MCF 10A (cell line): ENCODE measurements at regions of chrX and their contacts with region 1.

Region 1: GRCh38 chrX:111869639-111870034 is 6.3 kb upstream of the TRPC5OS start:
- DNase-seq: peak; percentile 61
- H3K4me3 Mint-ChIP-seq: no peak overlapping the region
- H3K27ac Mint-ChIP-seq: no peak overlapping the region
- H3K4me1 Mint-ChIP-seq: peaks cover 6% of the 10 kb centered on the region
- H3K27me3 Mint-ChIP-seq: peaks cover 59% of the 10 kb centered on the region
- CTCF ChIP-seq: peak; percentile 60

Region 2: DNA sequence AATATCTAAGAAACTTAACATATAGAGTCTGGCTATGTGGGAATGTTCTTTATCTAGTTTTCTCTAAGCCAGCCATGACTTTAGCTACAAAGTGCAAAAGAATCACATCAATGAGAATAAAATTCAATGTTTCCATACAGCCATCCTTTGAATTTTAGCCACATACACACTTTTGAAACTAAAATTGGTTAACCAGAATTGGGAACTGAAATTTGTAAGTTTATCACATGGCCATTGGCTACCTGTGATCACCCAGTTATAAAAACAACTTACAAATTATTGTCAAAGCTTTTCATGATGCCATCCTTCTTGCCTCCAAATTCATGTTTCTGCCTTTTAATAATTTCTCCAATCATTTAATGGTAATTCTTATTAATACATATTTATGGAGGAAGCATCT is 723.8 kb before region 1 on chrX:
- CTCF ChIA-PET with region 1: no interaction called
- POLR2A ChIA-PET with region 1: no interaction called
- intact Hi-C with region 1: no loop called
- DNase-seq: no peak
- H3K4me3 Mint-ChIP-seq: no peak overlapping the region
- H3K27ac Mint-ChIP-seq: no peak overlapping the region
- H3K4me1 Mint-ChIP-seq: no peaks in the 10 kb centered on the region
- H3K27me3 Mint-ChIP-seq: peaks cover 76% of the 10 kb centered on the region
- CTCF ChIP-seq: no peak

Region 3: GRCh38 chrX:111854778-111855490 is 14.7 kb before region 1 on chrX:
- CTCF ChIA-PET with region 1: interaction called, 12 read pairs
- POLR2A ChIA-PET with region 1: interaction called, 3 read pairs
- intact Hi-C with region 1: no loop called
- DNase-seq: peak; percentile 19
- H3K4me3 Mint-ChIP-seq: no peak overlapping the region
- H3K27ac Mint-ChIP-seq: no peak overlapping the region
- H3K4me1 Mint-ChIP-seq: no peaks in the 10 kb centered on the region
- H3K27me3 Mint-ChIP-seq: peaks cover 74% of the 10 kb centered on the region
- CTCF ChIP-seq: no peak

Region 4: DNA sequence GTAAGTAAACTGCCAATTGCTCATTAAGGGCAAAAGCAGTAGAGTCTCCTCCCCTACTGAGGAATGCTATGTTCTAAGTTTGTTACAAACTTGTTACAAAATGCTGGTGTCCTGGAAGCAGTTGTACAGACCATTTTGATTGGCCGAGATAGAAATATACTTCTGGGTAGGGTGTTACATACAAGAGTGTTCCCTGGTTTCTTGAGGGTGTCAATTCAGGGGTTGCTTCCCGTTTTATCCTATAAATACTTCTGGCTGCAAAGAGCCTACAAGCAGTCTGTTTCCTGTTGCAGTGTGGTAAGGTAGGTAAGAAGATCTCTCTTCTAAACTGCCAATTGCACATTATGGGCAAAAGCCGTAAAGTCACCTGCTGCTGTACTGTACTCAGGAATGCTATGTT is 12.1 kb after region 1 on chrX:
- CTCF ChIA-PET with region 1: interaction called, 16 read pairs
- POLR2A ChIA-PET with region 1: interaction called, 4 read pairs
- intact Hi-C with region 1: no loop called
- DNase-seq: no peak
- H3K4me3 Mint-ChIP-seq: no peak overlapping the region
- H3K27ac Mint-ChIP-seq: no peak overlapping the region
- H3K4me1 Mint-ChIP-seq: no peaks in the 10 kb centered on the region
- H3K27me3 Mint-ChIP-seq: peaks cover 25% of the 10 kb centered on the region
- CTCF ChIP-seq: no peak

Region 5: GRCh38 chrX:112025753-112026152 is 156.1 kb after region 1 on chrX:
- CTCF ChIA-PET with region 1: interaction called, 5 read pairs
- POLR2A ChIA-PET with region 1: no interaction called
- intact Hi-C with region 1: loop called (anchors 2 kb)
- DNase-seq: no peak
- H3K4me3 Mint-ChIP-seq: no peak overlapping the region
- H3K27ac Mint-ChIP-seq: no peak overlapping the region
- H3K4me1 Mint-ChIP-seq: no peaks in the 10 kb centered on the region
- H3K27me3 Mint-ChIP-seq: peaks cover 73% of the 10 kb centered on the region
- CTCF ChIP-seq: no peak

Region 6: GRCh38 chrX:112147206-112147605 is 277.6 kb after region 1 on chrX:
- CTCF ChIA-PET with region 1: no interaction called
- POLR2A ChIA-PET with region 1: no interaction called
- intact Hi-C with region 1: loop called (anchors 1 kb)
- DNase-seq: peak; percentile 49
- H3K4me3 Mint-ChIP-seq: no peak overlapping the region
- H3K27ac Mint-ChIP-seq: no peak overlapping the region
- H3K4me1 Mint-ChIP-seq: no peaks in the 10 kb centered on the region
- H3K27me3 Mint-ChIP-seq: peaks cover 42% of the 10 kb centered on the region
- CTCF ChIP-seq: peak; percentile 54